Transverse colon (tissue), 4 donors: ENCODE measurements at regions of chr14 and their contacts with region 1.

Region 1: DNA sequence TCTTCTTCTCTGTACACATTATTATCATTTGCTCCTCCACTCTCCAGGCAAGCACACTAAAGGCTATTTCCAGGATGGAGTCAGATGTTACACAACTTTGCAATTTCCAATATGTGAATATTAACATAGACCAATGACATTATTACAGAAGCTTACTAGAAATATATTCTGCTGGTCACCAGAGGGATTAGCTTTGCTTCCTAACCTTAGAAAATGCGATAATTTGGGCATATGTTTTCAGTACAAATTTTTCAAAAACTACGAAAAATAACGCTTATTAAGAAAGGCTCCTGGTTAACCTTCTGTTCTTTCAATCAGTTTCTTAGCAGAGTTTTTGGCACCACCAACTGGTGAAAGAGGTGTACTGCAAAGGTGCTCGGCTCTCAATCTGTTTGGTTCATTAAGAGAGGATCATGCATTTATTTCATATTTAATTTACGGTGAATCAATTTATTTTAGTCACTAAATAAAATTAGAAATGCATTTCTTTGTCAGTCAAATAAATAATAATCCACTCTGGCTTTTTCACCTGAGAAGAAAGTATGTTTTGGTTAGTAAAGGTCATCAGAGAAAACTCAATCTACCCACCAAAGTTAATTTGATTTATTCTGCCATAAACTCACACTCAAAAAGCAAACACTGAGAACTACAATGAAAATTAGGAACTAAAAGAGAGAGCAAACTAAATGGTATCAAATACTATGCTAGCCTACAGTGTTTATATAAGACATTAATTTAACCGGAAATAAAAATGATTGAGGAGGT is 39.2 kb downstream of the EFCAB11 start:
- DNase-seq: peak; percentile 65
- H3K4me3 ChIP-seq: no peak overlapping the region
- H3K27ac ChIP-seq: no peak overlapping the region
- H3K4me1 ChIP-seq: peaks cover 13 to 29% (median 22%) of the 10 kb centered on the region in 4 donors
- H3K27me3 ChIP-seq: no peaks in the 10 kb centered on the region
- CTCF ChIP-seq: peak; percentile 88 to 97 (median 95)
- EP300 ChIP-seq: no peak
- POLR2A ChIP-seq: no peak

Region 2: GRCh38 chr14:89040460-89041259 is 874.6 kb before region 1 on chr14:
- in situ Hi-C with region 1: loop called in 3 of 4 experiments (anchors 5 to 25 kb)
- intact Hi-C with region 1: loop called (anchors 5 kb)
- DNase-seq: peak; percentile 88
- H3K4me3 ChIP-seq: peak overlapping the region in 3 of 4 donors; percentile 23 to 44 (median 24)
- H3K27ac ChIP-seq: peak overlapping the region; percentile 84 to 92 (median 88)
- H3K4me1 ChIP-seq: peaks cover 3 to 22% (median 8%) of the 10 kb centered on the region in 4 donors
- H3K27me3 ChIP-seq: no peaks in the 10 kb centered on the region
- CTCF ChIP-seq: peak; percentile 94 to 97 (median 95)
- EP300 ChIP-seq: no peak
- POLR2A ChIP-seq: no peak

Region 3: DNA sequence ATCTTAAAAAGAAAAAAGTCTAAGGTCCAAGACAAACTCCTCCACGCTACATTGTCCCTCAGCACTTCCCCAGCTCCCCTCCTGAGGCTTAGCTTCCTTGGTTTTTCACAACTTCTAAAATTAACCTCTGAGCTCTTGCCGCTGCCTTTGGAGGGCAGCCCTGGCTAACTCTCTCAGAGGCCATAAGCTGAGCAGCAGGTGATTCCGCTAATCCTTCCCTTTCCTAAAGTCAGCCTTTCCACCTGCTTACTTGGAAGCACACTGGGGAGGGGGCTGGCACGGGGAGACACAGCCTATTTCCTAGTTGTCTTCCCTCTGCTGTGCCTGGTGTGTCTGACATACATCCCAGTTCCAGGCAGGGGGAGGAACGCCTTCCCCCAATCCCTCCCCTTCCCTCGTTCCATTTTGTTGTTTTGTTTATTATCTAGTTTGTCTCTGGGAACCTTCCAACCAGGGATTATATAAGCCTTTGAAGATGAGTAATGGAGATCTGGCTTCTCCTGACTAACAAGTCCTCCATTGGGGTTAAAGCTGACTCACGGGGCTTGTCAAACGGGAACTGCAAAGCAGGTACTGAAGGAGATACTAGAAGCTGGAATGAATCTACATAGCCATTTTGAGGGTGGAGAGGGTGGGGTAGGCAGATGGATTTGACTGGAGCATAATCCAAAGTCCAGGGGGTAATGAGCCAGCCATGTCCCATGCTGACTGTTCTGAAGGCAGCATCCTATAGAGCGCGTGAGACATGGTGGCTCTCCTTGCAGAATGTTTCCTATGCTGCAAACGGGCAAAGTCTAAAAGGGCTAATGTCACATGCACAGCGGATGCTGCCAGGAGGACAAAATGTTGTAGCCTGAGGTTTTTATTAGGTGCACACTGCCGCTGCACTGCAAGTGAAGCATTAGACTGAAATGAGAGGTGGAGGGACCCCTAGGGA is 729.1 kb before region 1 on chr14:
- in situ Hi-C with region 1: loop called in 1 of 4 experiments (anchors 25 kb)
- intact Hi-C with region 1: no loop called
- DNase-seq: no peak
- H3K4me3 ChIP-seq: no peak overlapping the region
- H3K27ac ChIP-seq: no peak overlapping the region
- H3K4me1 ChIP-seq: peaks cover 0 to 19% (median 0%) of the 10 kb centered on the region in 4 donors
- H3K27me3 ChIP-seq: no peaks in the 10 kb centered on the region
- CTCF ChIP-seq: no peak
- EP300 ChIP-seq: no peak
- POLR2A ChIP-seq: no peak

Region 4: GRCh38 chr14:89399594-89400068 is 515.7 kb before region 1 on chr14:
- in situ Hi-C with region 1: loop called in 2 of 4 experiments (anchors 25 kb)
- intact Hi-C with region 1: no loop called
- DNase-seq: no peak
- H3K4me3 ChIP-seq: no peak overlapping the region
- H3K27ac ChIP-seq: peak overlapping the region in 2 of 4 donors; percentile 26 to 44
- H3K4me1 ChIP-seq: peaks cover 0 to 24% (median 10%) of the 10 kb centered on the region in 4 donors
- H3K27me3 ChIP-seq: no peaks in the 10 kb centered on the region
- CTCF ChIP-seq: no peak
- EP300 ChIP-seq: no peak
- POLR2A ChIP-seq: no peak

Region 5: DNA sequence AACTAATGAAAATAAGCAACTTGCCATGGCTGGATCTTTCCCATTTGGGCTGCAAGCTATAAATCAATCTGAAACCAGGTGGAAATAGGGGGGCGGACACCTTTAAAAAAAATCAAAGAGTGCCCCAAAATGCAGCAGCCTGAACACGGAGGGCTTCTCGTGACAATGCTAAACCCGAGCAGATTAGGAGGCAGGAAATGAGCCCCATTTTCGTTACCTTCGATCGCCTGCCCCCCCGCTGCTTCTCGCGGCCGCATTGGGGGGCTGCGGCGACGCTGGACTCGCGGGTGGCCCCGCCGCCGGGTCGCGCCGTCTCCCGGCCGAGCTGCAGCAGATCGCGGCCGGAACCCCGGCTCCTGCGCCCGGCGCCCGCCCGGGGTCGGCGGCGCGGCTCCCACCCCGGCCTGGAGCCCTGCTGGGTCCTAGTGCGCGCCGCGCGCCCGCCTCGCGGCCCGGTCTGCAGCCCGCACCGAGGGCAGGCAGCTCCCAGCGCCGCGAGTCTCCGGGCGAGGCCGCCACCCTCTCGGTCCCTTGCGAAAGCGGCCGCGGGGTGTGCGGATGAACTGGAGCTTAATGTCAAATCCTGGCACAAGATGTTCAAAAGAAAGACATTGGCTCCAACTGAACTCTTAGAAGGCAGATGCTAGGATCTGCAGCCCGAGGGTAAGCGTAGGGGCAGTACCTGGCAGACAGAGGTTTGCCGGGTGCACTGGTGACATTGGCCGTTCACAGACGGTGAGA is 296.3 kb before region 1 on chr14:
- in situ Hi-C with region 1: loop called in 1 of 4 experiments (anchors 25 kb)
- intact Hi-C with region 1: no loop called
- DNase-seq: peak; percentile 76
- H3K4me3 ChIP-seq: peak overlapping the region; percentile 70 to 93 (median 78)
- H3K27ac ChIP-seq: peak overlapping the region; percentile 77 to 88 (median 85)
- H3K4me1 ChIP-seq: peaks cover 0 to 41% (median 12%) of the 10 kb centered on the region in 4 donors
- H3K27me3 ChIP-seq: no peaks in the 10 kb centered on the region
- CTCF ChIP-seq: no peak
- EP300 ChIP-seq: no peak
- POLR2A ChIP-seq: no peak

Region 6: DNA sequence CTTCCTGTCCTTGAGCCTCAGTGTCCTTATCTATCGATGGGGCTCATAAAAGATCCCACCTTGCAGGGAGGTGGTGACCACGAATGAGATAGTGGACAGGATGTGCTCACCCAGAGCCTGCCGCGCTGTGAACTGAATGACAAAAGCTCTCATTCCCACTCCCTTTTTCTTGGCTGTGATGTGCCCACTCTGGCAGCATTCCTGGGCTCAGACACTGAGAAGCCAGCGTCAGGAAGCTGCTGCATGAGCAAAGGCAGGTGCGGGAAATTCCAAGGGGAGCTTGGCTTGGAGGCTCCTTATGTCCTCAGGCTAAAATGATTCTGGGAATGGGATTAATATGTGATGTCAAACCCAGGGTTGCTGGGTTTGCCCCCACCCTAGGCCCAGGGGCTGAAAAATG is 22.3 kb before region 1 on chr14:
- in situ Hi-C with region 1: no loop called
- intact Hi-C with region 1: no loop called
- DNase-seq: no peak
- H3K4me3 ChIP-seq: no peak overlapping the region
- H3K27ac ChIP-seq: no peak overlapping the region
- H3K4me1 ChIP-seq: no peaks in the 10 kb centered on the region
- H3K27me3 ChIP-seq: no peaks in the 10 kb centered on the region
- CTCF ChIP-seq: no peak
- EP300 ChIP-seq: no peak
- POLR2A ChIP-seq: no peak